ENCODE measurements at regions of chr12 and their contacts with region 1.

Region 1: DNA sequence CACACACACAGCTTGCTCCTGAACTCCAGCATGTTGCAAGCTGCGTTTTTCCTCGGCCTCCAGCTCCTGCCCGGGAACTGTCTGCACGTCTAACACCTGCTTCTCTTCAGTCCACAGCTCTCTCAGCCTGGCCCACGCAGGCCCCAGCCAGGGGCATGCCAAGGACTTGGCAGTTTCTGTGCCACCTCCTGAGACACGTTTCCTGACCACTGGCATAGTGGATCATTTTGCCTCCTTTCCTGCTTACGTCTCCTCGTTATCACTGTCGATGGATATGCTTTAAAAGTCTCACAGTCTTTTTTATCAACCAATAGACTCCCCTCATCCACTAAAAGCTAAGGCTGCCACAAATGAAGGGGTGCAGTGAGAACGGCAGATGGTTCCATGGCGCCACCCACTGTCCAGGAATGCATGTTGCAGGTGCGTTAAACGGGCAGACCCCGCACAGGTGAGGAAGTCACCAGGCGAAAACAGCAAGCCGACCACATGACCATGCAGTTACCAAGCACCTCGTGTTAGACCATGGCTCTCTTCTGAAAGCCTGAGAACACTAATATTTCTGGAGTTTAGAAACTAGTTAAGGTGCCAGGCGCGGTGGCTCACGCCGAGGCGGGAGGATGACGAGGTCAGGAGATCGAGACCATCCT is 14.7 kb upstream of the TEAD4 start:
- DNase-seq: peak in 2 of 3 donors; percentile 50 to 61
- ATAC-seq: peak; percentile 76 to 92 (median 82)
- H3K4me3 ChIP-seq: no peak overlapping the region
- H3K27ac ChIP-seq: no peak overlapping the region
- H3K4me1 ChIP-seq: peaks cover 0 to 3% (median 0%) of the 10 kb centered on the region in 4 donors
- H3K27me3 ChIP-seq: no peaks in the 10 kb centered on the region
- CTCF ChIP-seq: peak; percentile 65 to 76 (median 74)
- POLR2A ChIP-seq: no peak

Region 2: GRCh38 chr12:2212971-2213869 is 731.3 kb before region 1 on chr12:
- intact Hi-C with region 1: no loop called
- DNase-seq: no peak
- ATAC-seq: no peak
- H3K4me3 ChIP-seq: no peak overlapping the region
- H3K27ac ChIP-seq: no peak overlapping the region
- H3K4me1 ChIP-seq: no peaks in the 10 kb centered on the region
- H3K27me3 ChIP-seq: no peaks in the 10 kb centered on the region
- CTCF ChIP-seq: no peak
- POLR2A ChIP-seq: no peak

Region 3: DNA sequence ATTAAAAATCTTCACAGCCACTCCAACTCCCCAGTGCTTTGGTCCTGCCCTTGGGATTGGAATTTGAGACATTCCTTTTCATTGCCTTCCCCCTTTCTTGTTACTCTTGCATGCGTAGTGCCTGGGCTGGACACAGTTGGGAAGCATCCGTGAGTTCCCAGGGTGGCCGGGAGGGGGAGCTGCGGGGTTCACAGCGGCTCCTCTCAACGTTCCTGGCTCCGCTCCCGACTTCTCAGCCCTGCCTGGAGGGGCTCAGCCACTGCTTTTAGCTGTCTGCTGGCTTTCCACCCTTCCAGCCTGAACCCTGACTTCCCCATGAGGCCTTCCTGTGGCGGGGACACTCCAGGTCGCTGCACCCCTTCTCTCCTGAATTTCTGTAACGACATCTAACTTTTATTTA is 90.9 kb before region 1 on chr12:
- intact Hi-C with region 1: loop called in 1 of 2 experiments (anchors 10 kb)
- DNase-seq: peak; percentile 71 to 76 (median 76)
- ATAC-seq: peak; percentile 74 to 86 (median 80)
- H3K4me3 ChIP-seq: no peak overlapping the region
- H3K27ac ChIP-seq: no peak overlapping the region
- H3K4me1 ChIP-seq: peaks cover 0 to 3% (median 0%) of the 10 kb centered on the region in 4 donors
- H3K27me3 ChIP-seq: no peaks in the 10 kb centered on the region
- CTCF ChIP-seq: peak; percentile 58 to 77 (median 72)
- POLR2A ChIP-seq: no peak

Region 4: DNA sequence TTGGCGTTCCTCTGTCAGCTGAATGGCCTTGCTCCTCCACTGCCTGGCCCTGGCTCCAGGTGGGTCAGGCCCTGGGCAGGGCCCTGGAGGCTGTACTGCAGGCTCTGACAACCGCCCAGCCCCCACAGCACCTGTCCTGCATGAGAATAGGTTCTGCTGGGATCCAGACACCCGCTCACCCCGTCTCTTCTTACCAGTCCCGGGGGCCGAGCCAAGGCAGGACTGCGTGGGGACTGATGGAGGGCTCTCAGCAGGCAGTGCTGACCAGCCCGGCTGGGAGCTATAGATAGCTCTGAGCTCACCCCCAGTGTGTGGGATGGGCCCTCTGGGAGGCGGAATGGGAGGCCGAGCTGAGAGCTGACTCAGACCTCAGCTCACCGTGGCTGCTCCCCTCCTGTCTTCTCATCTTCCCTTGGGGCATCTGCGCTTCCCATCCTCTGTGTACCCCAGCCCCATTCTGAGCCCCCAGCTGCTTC is 54.3 kb after region 1 on chr12:
- intact Hi-C with region 1: no loop called
- DNase-seq: no peak
- ATAC-seq: no peak
- H3K4me3 ChIP-seq: no peak overlapping the region
- H3K27ac ChIP-seq: no peak overlapping the region
- H3K4me1 ChIP-seq: no peaks in the 10 kb centered on the region
- H3K27me3 ChIP-seq: no peaks in the 10 kb centered on the region
- CTCF ChIP-seq: no peak
- POLR2A ChIP-seq: no peak

Measured in right lobe of liver (tissue), 6 donors.